Activated CD8-positive, alpha-beta T cell treated with anti-CD3 and anti-CD28 coated beads, Interleukin-2, amount 10 ng/mL, durations not matched to agents 7 days and 5 days (primary cell): ENCODE measurements at regions of chr11 and their contacts with region 1.

Region 1: DNA sequence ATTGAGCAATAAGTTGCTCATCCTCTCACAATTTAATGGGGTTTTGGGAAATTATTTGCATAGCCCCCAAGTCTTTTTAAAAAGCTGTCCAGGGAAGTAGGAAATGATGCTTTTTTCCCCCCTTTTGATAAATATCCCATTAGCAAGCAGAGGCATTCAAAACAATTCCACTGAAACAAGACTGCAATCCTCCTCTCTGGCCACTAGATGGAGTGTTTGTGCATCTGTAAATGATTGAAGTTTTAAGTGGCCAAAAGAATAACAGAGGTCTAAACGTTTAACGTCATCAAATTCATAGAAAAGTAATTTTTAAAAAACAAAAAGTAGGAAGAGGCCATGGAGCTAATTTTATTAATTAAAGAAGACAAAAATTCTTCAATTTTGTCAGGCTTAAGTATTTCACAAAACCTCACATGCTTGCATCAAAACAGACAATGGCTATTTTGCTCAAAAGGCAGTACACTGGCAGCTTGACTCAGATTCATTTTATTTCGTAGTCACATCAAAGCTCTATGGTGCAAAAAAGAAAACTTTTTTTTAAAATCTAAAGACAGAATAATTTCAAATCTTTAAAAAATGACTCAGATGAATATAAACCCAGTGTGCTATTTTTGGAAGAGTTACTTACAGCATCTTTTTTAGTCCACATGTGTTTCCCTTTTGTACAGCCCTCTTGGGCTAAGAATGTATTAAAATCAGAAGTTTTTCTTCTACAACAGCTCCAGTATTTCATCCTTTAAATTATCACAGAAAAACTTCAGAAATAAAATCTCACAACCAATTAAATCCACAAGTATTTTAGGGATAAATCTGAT is 17.8 kb downstream of the CHORDC1 start:
- DNase-seq: no peak
- ATAC-seq: peak; percentile 65
- H3K4me3 Mint-ChIP-seq: no peak overlapping the region
- H3K27ac Mint-ChIP-seq: no peak overlapping the region
- H3K4me1 Mint-ChIP-seq: peaks cover 3% of the 10 kb centered on the region
- H3K27me3 Mint-ChIP-seq: no peaks in the 10 kb centered on the region

Region 2: GRCh38 chr11:90148900-90149299 is 56.1 kb before region 1 on chr11:
- CTCF ChIA-PET with region 1: no interaction called
- POLR2A ChIA-PET with region 1: no interaction called
- DNase-seq: no peak
- ATAC-seq: no peak
- H3K4me3 Mint-ChIP-seq: no peak overlapping the region
- H3K27ac Mint-ChIP-seq: no peak overlapping the region
- H3K4me1 Mint-ChIP-seq: no peaks in the 10 kb centered on the region
- H3K27me3 Mint-ChIP-seq: no peaks in the 10 kb centered on the region

Region 3: GRCh38 chr11:90222459-90223247 is 17.6 kb after region 1 on chr11 and contains the start of gene CHORDC1:
- CTCF ChIA-PET with region 1: interaction called, 28 read pairs
- POLR2A ChIA-PET with region 1: no interaction called
- DNase-seq: peak; percentile 95
- ATAC-seq: peak; percentile 93
- H3K4me3 Mint-ChIP-seq: peak within 1 kb of the TSS; percentile 98
- H3K27ac Mint-ChIP-seq: peak within 1 kb of the TSS; percentile 97
- H3K4me1 Mint-ChIP-seq: peaks cover 42% of the 10 kb centered on the region
- H3K27me3 Mint-ChIP-seq: no peaks in the 10 kb centered on the region
- total RNA-seq, gene CHORDC1: 66.7 to 68.4 TPM